Activated CD8-positive, alpha-beta T cell treated with anti-CD3 and anti-CD28 coated beads for 36 hours (primary cell): ENCODE measurements at regions of chr11 and their contacts with region 1.

Region 1: GRCh38 chr11:64269380-64270234 is 14.9 kb downstream of the BAD start:
- DNase-seq: peak; percentile 98
- ATAC-seq: peak; percentile 73
- H3K4me3 Mint-ChIP-seq: peak overlapping the region; percentile 96
- H3K27ac Mint-ChIP-seq: peak overlapping the region; percentile 95
- H3K4me1 Mint-ChIP-seq: peaks cover 21% of the 10 kb centered on the region
- H3K27me3 Mint-ChIP-seq: no peaks in the 10 kb centered on the region
- CTCF ChIP-seq: no peak

Region 2: GRCh38 chr11:64110465-64111375 is 158.9 kb before region 1 on chr11:
- CTCF ChIA-PET with region 1: no interaction called
- POLR2A ChIA-PET with region 1: no interaction called
- intact Hi-C with region 1: no loop called
- DNase-seq: no peak
- ATAC-seq: no peak
- H3K4me3 Mint-ChIP-seq: no peak overlapping the region
- H3K27ac Mint-ChIP-seq: no peak overlapping the region
- H3K4me1 Mint-ChIP-seq: no peaks in the 10 kb centered on the region
- H3K27me3 Mint-ChIP-seq: no peaks in the 10 kb centered on the region
- CTCF ChIP-seq: no peak

Region 3: DNA sequence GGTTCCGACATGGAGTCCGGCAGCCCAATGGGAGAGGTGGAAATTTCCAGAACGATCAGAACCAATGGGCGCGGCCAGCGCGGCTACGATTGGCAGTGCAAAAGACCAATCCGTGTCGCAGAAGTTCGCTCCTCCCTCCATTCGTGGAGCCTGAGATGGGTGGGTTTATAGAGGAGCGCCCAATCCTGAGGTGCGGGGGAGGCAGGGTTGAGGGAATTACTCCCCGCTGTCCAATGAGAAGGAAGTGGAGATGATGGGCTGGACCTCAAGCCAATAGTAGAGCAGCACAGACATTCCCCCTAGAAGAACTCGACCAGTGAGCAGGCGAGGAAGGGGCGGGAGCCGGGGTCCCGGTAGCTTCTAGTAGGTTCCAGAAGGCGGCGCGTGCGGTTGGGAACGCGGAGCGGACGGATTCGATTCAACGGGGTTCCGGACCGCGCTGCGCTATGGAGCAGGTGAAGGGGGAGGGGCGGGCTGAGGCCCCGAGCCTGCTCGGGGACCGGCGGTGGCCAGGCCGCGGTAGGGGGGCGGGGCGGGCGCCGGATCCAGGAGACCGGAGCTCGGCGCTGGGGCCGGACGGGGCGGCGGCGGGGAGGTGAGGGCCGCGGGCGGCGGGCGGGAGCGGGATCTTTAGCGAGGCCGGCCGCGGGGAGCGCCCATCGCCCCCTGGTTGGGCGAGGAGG is 83.7 kb before region 1 on chr11 and contains the start of gene STIP1:
- CTCF ChIA-PET with region 1: no interaction called
- POLR2A ChIA-PET with region 1: interaction called, 20 read pairs
- intact Hi-C with region 1: no loop called
- DNase-seq: peak; percentile 99
- ATAC-seq: peak; percentile 89
- H3K4me3 Mint-ChIP-seq: no peak within 1 kb of the TSS
- H3K27ac Mint-ChIP-seq: peak within 1 kb of the TSS; percentile 98
- H3K4me1 Mint-ChIP-seq: peaks cover 37% of the 10 kb centered on the region
- H3K27me3 Mint-ChIP-seq: no peaks in the 10 kb centered on the region
- CTCF ChIP-seq: no peak
- total RNA-seq, gene STIP1: 396 to 416 TPM

Region 4: GRCh38 chr11:64246871-64247728 is 22.5 kb before region 1 on chr11 and contains the start of gene PPP1R14B:
- CTCF ChIA-PET with region 1: interaction called, 12 read pairs
- POLR2A ChIA-PET with region 1: interaction called, 132 read pairs
- intact Hi-C with region 1: no loop called
- DNase-seq: peak; percentile 89
- ATAC-seq: peak; percentile 55
- H3K4me3 Mint-ChIP-seq: peak within 1 kb of the TSS; percentile 94
- H3K27ac Mint-ChIP-seq: peak within 1 kb of the TSS; percentile 93
- H3K4me1 Mint-ChIP-seq: peaks cover 33% of the 10 kb centered on the region
- H3K27me3 Mint-ChIP-seq: no peaks in the 10 kb centered on the region
- CTCF ChIP-seq: no peak
- total RNA-seq, gene PPP1R14B: 285 to 287 TPM

Region 5: DNA sequence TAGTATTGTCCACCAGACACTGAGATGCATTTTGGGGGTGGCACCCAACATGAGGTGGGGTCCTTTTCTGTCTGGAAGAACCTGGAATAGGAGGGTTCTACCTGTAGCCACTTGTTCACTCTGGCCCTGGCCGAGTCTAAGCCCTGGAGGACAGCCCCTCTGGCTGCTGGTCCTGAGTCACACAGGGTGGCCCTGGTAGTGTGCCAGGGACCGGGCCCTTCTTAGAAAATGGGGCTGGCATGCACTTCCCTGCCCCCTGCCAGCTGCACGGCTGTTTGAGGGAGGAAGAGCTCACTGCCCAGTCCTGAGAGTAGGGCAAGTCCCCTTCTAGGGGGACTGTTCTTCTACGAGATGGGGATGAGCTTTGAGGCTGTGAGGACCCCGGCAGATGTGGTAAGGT is 16.1 kb before region 1 on chr11:
- CTCF ChIA-PET with region 1: interaction called, 12 read pairs
- POLR2A ChIA-PET with region 1: interaction called, 132 read pairs
- intact Hi-C with region 1: no loop called
- DNase-seq: no peak
- ATAC-seq: no peak
- H3K4me3 Mint-ChIP-seq: peak overlapping the region; percentile 18
- H3K27ac Mint-ChIP-seq: no peak overlapping the region
- H3K4me1 Mint-ChIP-seq: peaks cover 14% of the 10 kb centered on the region
- H3K27me3 Mint-ChIP-seq: no peaks in the 10 kb centered on the region
- CTCF ChIP-seq: no peak

Region 6: GRCh38 chr11:64259533-64260067 is 10.0 kb before region 1 on chr11:
- CTCF ChIA-PET with region 1: no interaction called
- POLR2A ChIA-PET with region 1: interaction called, 14 read pairs
- intact Hi-C with region 1: no loop called
- DNase-seq: no peak
- ATAC-seq: peak; percentile 40
- H3K4me3 Mint-ChIP-seq: no peak overlapping the region
- H3K27ac Mint-ChIP-seq: peak overlapping the region; percentile 32
- H3K4me1 Mint-ChIP-seq: peaks cover 12% of the 10 kb centered on the region
- H3K27me3 Mint-ChIP-seq: no peaks in the 10 kb centered on the region
- CTCF ChIP-seq: no peak

Region 7: DNA sequence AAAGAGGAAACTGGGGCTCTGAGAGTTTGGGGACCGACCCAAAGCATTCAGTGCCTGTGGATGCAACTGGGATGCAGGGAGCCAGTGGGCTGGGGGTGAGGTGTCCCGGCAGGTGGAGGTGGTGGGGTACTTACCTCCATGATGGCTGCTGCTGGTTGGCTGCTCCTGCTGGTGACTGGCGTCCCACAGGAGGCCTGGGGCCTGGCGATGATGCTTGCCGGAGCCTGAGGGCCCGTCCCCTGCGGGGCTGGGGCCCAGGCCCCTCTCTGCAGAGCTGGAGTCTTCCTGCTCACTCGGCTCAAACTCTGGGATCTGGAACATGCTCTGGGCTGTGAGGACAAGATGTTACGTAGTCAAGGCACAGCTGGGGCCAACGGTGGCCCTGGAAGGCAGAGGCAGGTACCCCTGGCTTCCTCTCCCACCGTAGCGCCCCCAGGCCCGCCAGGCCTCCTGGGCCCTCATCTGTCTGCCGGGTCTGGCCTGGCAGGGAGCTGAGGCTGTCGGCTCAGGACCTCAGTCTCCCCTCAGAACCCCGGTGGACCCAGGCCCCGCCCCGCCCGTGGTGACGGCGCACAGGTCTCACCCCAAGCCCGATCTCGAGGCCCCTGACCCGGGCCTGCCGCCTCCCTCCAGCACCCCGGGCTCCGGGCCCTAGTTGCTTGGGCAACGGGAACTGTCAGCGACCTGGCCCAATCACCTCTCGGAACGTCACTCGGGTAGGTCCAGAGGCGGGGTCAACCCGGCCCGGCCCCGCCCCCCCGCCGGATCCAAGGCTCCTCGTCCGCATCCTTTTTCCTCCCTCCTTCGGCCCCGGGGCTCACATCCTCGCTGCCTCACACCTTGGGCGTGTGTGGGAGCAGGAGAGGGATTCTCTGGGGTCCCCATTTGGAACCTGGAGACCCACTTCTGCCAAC is 14.7 kb after region 1 on chr11 and contains the start of gene BAD:
- CTCF ChIA-PET with region 1: interaction called, 5 read pairs
- POLR2A ChIA-PET with region 1: interaction called, 47 read pairs
- intact Hi-C with region 1: no loop called
- DNase-seq: peak; percentile 95
- ATAC-seq: peak; percentile 87
- H3K4me3 Mint-ChIP-seq: peak within 1 kb of the TSS; percentile 80
- H3K27ac Mint-ChIP-seq: peak within 1 kb of the TSS; percentile 88
- H3K4me1 Mint-ChIP-seq: peaks cover 15% of the 10 kb centered on the region
- H3K27me3 Mint-ChIP-seq: no peaks in the 10 kb centered on the region
- CTCF ChIP-seq: no peak
- total RNA-seq, gene BAD: 17.2 to 17.7 TPM